Cardiac septum (tissue), 1 donor: ENCODE measurements at regions of chr9 and their contacts with region 1.

Region 1: DNA sequence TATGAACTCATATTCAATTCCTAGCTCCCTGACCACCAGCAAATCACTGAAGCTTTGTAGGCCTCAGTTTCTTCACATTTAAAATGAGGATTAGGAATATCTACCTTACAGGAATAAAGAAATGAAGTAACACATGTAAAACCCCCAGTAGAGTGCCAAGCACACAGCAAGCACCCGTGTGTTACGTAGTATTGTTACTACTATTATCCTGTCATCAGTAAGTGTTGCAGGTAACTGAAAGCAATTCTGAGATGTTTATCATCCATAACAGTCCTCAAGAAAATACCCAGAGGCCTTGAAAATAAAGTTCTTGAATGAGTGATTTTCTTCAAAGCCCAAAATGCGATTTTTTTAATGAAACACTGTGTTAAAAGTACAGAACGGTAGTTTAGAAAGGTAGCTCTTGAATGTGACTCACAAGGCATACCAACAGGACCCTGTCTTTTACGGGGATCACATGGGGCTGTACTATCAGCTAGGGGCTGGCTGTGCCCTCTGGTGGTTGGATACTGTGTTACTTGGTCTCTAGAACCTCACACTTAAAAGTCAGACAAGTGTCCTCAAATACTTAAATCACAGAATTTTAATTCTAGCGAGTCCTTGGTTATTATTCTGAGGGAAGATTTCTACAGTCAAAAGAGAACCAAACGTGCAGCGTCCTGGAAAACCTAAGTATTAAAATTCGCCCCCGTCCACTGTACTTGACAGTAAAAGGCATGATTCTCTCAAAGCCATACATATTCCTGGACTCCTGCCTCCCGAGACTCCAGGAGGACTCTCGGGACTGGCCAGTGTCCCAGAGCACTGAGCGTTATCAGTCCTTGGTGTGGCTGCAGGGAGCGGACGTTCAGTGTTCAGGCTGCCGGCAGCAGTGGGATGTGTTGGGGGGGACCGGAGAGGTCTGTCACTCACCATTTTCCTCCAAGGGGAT is 725 bp downstream of the NDUFB6 start:
- DNase-seq: no peak

Region 2: DNA sequence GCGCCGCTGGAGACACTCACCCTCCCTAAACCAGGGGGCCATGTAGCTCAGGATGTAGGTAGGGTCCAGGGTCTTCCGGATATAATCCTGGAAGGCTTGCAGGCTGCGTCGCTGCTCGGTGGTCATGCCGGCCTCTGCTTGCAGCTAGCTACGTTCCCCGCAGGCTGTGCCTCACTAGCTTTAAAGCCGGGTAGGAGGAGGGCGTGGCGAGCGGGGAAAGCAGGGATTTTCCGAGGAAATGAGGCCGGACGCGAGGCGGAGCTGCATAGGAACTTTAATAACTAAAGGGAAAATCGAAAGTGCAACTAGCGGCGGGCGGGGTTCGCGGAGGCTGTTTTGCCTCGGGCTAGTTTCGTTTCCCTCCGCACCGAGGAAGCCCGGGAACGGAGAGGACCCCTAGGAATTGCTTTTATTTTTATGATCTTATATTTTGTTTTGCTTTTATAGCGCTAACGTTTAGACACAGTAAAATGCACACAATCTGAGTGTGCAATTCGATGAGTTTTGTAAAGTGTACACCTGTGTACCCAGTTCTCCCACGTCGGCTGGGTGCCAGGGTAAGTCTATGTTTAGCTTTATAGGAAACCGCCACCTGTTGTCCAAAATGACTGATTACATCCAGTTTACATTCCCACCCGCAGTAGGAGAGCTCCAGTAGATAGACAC is 46.1 kb before region 1 on chr9 and contains the start of gene RIGI:
- intact Hi-C with region 1: loop called (anchors 2 kb)
- DNase-seq: peak; percentile 97
- total RNA-seq, gene RIGI: 2.8 TPM

Region 3: DNA sequence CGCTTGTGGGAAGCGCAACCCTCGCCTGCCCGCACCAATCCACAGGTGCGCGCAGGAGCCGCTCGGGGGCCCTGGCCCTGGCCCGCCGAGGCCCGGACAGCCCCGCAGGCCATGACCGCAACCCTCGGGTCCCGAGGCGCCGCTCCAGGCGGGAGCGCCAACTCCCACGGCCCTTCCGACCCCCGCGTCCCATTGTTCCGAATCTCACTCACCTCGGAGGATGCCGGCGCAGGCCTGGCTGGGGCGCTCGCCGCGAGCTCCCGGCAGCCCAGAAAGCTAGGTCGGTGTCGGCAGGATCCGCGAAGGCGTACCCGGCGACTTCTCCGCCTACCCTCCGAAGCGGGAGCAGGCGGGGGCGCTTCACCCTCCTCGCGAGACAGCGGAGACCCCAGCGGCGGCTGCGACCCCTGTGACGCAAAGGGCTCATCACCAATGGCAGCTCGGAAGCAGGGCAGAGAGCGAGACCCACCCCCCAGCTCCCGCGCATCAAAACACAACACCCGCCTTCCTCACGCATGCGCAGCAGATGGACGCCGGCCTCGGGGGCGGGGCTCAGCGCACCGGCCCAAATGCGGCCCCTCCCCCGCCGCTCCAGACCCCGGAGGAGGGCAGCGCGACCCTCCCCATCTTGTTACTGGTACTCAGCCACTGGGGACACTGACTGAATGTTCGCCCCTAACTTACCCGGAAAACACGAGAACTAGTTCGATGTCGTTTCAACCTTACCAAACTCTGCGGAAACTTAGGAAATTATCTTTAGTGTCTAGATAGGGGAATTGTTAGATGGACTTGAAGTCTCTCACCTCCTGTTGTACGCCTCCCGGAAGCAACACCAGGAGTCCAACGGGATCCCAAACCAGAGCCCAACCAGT is 21.4 kb before region 1 on chr9:
- intact Hi-C with region 1: loop called (anchors 1 kb)
- DNase-seq: peak; percentile 98